ENCODE measurements at regions of chr17 and their contacts with region 1.

Region 1: DNA sequence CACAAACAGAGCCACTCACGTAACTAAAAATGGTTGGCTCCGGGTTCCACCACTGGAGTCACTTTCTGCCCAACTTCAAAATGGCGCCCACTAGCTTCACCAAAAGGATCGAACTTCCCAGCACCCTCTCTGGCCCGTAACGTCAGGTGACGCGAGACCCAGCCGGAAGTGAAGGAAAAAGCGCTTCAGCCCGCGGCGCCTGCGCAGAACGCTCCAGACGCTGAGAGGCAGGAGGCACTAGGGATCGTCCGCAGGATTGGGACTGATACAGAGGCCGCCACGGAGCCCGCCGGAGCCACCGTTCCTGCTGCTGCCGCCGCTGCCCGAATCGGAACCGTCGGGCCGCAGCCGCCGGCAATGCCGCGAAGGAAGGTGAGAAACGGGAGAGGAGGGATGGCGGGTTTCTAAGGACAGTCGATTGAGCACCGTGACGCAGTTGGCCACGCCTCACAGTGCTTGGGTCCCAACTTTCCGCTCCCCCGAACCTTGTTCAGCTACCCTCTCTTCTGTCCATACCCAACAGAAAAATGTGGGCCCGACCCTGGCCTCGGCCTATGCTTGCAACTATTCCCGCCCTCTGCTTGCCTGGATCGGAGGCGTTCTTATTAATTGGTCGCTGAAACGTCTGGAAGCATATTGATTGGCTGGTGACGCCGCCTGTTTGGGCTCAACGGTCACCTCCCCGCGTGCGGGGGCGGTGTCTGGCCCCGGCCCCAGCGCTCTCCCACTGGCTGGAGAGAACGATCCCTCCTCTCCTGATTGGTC is at the start of gene KAT7:
- DNase-seq: peak; percentile 98 to 100 (median 99)

Region 2: GRCh38 chr17:49667854-49668253 is 120.8 kb before region 1 on chr17:
- intact Hi-C with region 1: no loop called
- DNase-seq: no peak

Region 3: DNA sequence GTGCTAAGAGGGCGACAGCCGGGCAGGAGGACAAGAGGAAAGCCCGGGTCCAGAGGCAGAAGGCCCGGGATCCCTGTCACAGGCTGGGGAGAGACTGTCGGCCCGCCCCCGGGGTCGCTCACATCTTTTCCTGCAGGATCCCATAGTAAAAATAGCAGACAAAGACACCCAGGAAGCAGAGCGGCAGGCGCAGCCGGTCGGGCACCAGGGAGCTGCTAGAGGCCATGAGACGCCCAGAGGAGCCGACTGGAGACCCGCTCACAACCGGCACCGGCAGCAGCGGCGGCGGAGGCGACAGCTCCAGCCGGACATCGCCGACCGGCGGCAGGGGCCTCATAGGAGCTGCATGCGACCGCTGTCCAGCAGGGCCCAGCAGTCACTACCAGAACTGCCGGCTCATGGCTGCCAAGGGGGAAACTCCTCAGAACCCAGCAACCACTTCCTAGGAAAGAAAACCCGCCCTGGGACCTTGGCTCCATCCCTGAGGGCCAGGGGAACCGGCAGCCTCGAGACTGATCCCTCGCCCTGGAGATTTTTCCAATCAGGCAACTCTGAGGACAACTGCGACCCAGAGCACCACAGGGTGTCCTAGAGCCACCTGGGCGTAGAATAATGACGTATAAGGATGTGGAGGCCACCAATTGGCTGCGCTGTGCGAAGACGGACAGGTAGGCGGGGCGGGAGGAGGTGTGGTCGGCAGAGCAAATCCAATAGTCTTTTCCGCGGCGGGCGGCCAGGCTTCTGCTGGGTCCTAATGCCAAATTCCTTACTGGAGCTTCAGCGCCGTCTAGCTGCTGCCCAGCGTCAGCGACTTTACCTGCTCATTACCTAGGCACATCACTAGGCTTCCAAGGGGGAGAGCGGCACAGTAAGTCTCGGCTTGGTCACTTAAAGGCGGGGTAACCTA is 80.8 kb before region 1 on chr17 and contains the start of gene SLC35B1:
- intact Hi-C with region 1: loop called (anchors 2 kb)
- DNase-seq: peak; percentile 99 to 100 (median 100)

Region 4: GRCh38 chr17:49763735-49764558 is 24.7 kb before region 1 on chr17 and contains the start of gene FAM117A:
- intact Hi-C with region 1: loop called (anchors 2 kb)
- DNase-seq: peak; percentile 87 to 99 (median 97)